ENCODE measurements at regions of chr10 and their contacts with region 1.

Region 1: GRCh38 chr10:68331455-68332258 is at the start of gene HNRNPH3:
- DNase-seq: peak; percentile 98
- ATAC-seq: peak; percentile 90
- H3K4me3 Mint-ChIP-seq: peak within 1 kb of the TSS; percentile 94
- H3K27ac Mint-ChIP-seq: peak within 1 kb of the TSS; percentile 100
- H3K4me1 Mint-ChIP-seq: peaks cover 38% of the 10 kb centered on the region
- H3K27me3 Mint-ChIP-seq: no peaks in the 10 kb centered on the region
- CTCF ChIP-seq: no peak
- total RNA-seq, gene HNRNPH3: 139 to 145 TPM

Region 2: DNA sequence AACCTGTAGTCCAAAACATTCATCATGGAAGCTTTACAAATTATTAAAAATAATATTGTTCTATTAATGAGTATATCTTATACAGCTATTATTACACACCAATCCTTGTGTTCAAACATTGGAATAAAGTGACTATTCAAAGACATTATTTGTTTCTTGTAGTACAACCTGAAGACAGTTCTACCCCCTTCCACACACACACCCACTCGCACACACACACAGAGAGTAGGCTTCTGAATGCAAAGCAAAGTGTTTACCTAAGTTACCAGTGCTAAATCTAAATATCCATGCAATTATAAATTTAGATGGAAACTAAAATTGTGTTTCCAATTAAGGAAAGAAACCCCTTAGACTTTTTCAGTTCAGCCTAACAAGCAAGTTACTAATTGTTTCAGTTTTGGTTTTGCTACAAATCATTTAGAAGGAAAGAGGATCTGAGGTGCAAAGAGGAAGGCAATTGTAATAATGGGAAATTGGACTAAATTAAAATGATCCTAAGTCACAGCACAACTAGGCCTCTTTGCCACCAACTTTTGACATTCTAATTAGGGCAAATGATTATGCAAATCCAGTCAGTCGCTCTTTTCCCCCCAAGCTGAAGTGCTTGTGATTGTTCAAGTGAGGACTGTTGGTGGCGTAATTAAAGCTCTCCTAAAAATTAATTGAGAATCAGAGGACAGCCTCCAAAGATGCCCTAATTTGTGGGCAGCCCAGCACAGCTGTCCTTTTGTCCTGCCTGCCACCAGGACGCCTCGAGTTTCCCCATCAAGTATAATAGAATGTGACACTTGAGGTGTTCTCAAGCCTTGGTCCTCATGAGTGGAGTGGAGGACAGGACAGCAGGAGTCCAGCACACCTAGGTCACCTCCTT is 79.8 kb before region 1 on chr10:
- CTCF ChIA-PET with region 1: no interaction called
- POLR2A ChIA-PET with region 1: no interaction called
- intact Hi-C with region 1: no loop called
- DNase-seq: no peak
- ATAC-seq: no peak
- H3K4me3 Mint-ChIP-seq: no peak overlapping the region
- H3K27ac Mint-ChIP-seq: no peak overlapping the region
- H3K4me1 Mint-ChIP-seq: peaks cover 4% of the 10 kb centered on the region
- H3K27me3 Mint-ChIP-seq: peaks cover 3% of the 10 kb centered on the region
- CTCF ChIP-seq: no peak

Region 3: GRCh38 chr10:68315582-68315981 is 16.1 kb before region 1 on chr10:
- CTCF ChIA-PET with region 1: interaction called, 8 read pairs
- POLR2A ChIA-PET with region 1: interaction called, 29 read pairs
- intact Hi-C with region 1: no loop called
- DNase-seq: no peak
- ATAC-seq: no peak
- H3K4me3 Mint-ChIP-seq: no peak overlapping the region
- H3K27ac Mint-ChIP-seq: peak overlapping the region; percentile 2
- H3K4me1 Mint-ChIP-seq: peaks cover 6% of the 10 kb centered on the region
- H3K27me3 Mint-ChIP-seq: no peaks in the 10 kb centered on the region
- CTCF ChIP-seq: no peak

Region 4: DNA sequence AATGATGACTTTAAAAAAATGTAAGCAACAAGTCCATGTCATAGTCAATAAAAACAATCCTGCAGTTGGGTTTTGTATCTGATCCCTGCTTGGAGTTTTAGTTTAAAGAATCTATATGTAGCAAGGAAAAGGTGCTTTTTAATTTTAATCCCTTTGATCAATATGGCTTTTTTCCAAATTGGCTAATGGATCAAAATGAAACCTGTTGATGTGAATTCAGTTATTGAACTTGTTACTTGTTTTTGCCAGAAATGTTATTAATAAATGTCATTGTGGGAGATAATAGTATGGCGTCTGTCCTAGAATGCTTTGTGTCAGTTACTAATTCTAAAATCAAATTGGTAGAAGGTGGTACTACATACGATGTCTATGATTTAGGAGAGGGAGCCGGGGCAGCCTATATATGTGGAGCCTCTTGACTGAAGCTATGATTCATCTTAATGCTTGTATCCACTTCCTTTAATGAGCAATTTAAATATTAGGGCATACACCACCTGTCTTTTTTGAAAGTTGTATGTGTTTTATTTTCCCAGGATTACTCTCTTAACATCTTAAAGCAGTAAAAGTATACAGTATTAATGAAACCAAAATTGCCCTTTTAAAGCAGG is 11.4 kb after region 1 on chr10:
- CTCF ChIA-PET with region 1: interaction called, 21 read pairs
- POLR2A ChIA-PET with region 1: interaction called, 44 read pairs
- intact Hi-C with region 1: no loop called
- DNase-seq: peak; percentile 13
- ATAC-seq: peak; percentile 30
- H3K4me3 Mint-ChIP-seq: no peak overlapping the region
- H3K27ac Mint-ChIP-seq: peak overlapping the region; percentile 19
- H3K4me1 Mint-ChIP-seq: peaks cover 38% of the 10 kb centered on the region
- H3K27me3 Mint-ChIP-seq: no peaks in the 10 kb centered on the region
- CTCF ChIP-seq: no peak

Region 5: DNA sequence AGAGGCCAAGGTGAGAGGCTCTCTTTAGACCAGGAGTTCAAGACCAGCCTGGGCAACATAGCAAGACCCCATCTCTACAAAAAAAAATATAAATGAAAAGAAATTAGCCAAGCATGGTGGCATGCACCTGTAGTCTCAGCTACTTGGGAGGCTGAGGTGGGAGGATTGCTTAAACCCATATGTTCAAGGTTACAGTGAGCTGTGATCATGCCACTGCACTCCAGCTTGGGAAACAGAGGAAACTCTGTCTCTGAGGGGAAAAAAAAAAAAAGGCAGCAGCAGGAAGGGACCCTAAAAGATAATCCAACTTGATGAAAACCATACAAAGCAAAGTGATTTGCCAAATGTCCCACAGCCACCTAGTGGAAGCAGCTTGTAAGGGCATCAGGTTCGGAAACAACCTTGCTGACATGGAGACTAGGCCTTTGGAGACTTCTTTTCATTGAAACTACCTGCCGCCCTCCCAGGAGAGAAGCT is 16.6 kb after region 1 on chr10:
- CTCF ChIA-PET with region 1: interaction called, 21 read pairs
- POLR2A ChIA-PET with region 1: interaction called, 44 read pairs
- intact Hi-C with region 1: no loop called
- DNase-seq: peak; percentile 57
- ATAC-seq: peak; percentile 85
- H3K4me3 Mint-ChIP-seq: no peak overlapping the region
- H3K27ac Mint-ChIP-seq: peak overlapping the region; percentile 75
- H3K4me1 Mint-ChIP-seq: peaks cover 10% of the 10 kb centered on the region
- H3K27me3 Mint-ChIP-seq: no peaks in the 10 kb centered on the region
- CTCF ChIP-seq: peak; percentile 71

Measured in activated CD8-positive, alpha-beta T cell treated with anti-CD3 and anti-CD28 coated beads for 36 hours (primary cell).